Panc1 (cell line): ENCODE measurements at regions of chr9 and their contacts with region 1.

Region 1: GRCh38 chr9:33329117-33329563 is 38.8 kb downstream of the NFX1 start:
- DNase-seq: peak; percentile 98
- ATAC-seq: peak; percentile 93
- H3K4me3 ChIP-seq: no peak overlapping the region
- H3K27ac ChIP-seq: peak overlapping the region; percentile 63
- H3K4me1 ChIP-seq: peaks cover 16% of the 10 kb centered on the region
- H3K27me3 ChIP-seq: no peaks in the 10 kb centered on the region
- CTCF ChIP-seq: no peak

Region 2: GRCh38 chr9:33106827-33107621 is 222.1 kb before region 1 on chr9:
- CTCF ChIA-PET with region 1: no interaction called
- POLR2A ChIA-PET with region 1: no interaction called
- in situ Hi-C with region 1: no loop called
- intact Hi-C with region 1: no loop called
- DNase-seq: no peak
- ATAC-seq: no peak
- H3K4me3 ChIP-seq: no peak overlapping the region
- H3K27ac ChIP-seq: no peak overlapping the region
- H3K4me1 ChIP-seq: no peaks in the 10 kb centered on the region
- H3K27me3 ChIP-seq: no peaks in the 10 kb centered on the region
- CTCF ChIP-seq: no peak

Region 3: GRCh38 chr9:33364127-33364526 is 35.0 kb after region 1 on chr9:
- CTCF ChIA-PET with region 1: no interaction called
- POLR2A ChIA-PET with region 1: interaction called, 12 read pairs
- in situ Hi-C with region 1: no loop called
- intact Hi-C with region 1: no loop called
- DNase-seq: no peak
- ATAC-seq: no peak
- H3K4me3 ChIP-seq: no peak overlapping the region
- H3K27ac ChIP-seq: no peak overlapping the region
- H3K4me1 ChIP-seq: no peaks in the 10 kb centered on the region
- H3K27me3 ChIP-seq: no peaks in the 10 kb centered on the region
- CTCF ChIP-seq: no peak